H1 (cell line): ENCODE measurements at regions of chr20 and their contacts with region 1.

Region 1: DNA sequence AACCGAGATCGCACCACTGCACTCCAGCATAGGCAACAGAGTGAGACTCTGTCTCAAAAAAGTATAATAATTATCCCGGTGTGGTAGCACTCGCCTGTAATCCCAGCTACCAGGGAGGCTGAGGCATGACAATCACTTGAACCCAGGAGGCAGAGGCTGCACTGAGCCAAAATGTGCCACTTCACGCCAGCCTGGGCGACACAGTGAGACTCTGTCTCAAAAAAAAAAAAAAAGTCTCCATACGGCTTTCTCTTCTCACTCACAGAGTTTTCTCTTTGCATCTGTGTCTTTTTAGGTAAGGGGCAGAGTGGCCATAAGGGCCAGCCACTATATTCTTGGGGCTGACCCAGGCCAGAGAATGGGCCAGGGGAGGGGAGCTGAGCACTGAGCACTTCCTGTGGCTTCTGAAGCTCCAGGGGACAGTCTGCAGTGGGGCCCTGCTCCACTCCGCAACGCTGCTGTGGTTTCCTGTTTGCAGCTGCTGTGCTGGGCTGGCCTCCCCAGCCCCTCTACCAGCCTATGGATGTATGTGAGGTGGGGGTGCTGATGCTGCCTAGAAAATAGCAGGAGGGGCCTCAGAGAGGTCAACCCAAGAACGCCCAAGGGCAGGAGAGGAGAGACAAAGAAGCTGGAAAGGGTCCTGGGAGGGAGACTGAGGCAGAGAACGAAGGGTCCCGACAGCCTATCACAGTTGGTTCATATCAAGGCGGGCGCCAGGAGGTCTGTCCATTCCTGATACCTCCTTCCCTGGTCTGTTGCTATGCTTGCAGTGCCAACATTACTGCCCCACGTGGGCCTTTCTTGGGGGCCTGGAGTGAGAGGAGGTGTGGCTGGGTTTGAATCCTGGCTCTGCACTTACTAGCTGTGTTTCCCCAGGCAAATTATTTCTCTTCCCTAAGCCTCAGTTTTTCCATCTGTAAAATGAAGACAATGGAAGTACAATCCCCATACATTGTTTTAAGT is 16.0 kb downstream of the SLA2 start:
- DNase-seq: no peak
- H3K4me3 ChIP-seq: no peak overlapping the region
- H3K27ac ChIP-seq: no peak overlapping the region
- H3K4me1 ChIP-seq: no peaks in the 10 kb centered on the region; a peak in 2 of 7 replicates
- H3K27me3 ChIP-seq: no peaks in the 10 kb centered on the region
- CTCF ChIP-seq: no peak
- EP300 ChIP-seq: no peak
- POLR2A ChIP-seq: no peak
- RAD21 ChIP-seq: no peak

Region 2: DNA sequence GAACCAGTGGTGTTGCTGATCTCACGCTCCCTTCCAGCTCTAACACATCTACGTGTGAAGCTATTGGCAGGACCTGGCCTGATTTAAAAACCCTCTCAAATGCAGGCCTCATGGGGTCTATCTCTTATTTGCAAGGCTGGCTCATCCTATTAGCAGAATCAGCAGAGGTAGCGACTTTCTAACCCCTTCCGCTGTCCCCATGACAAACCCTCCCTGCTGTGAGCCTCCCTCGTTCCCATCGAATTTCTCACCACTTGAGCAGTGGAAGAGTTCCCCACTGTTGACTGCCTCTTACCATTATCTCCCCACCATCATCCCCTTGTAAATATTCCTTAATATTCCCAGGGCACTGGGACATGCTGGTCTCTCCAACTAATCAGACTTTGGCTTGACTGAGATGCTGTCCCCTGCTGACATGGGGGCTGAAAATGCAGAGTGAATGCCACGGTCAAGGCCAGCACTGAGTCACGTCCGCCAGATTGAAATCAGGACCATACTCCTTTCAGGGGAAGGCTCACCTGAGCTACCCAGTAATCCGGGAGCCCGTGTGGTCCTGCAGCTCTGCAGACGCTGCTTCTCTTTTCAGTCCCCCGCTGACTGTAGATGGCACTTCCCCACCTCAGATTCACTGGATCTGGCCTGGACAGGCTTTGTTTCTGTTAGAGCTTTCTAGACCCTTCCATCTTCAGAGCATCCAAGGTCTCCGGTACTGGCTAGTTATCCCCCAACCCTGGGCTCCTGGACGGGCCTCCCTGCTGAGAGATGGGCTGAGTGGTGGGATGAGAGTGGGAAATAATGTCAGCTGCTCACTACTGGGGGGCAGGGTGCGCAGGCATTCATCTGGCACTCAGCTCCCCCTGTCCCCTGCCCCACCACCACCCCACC is 370.6 kb before region 1 on chr20:
- CTCF ChIA-PET with region 1: no interaction called
- POLR2A ChIA-PET with region 1: no interaction called
- DNase-seq: no peak
- H3K4me3 ChIP-seq: 0 out of 8 replicates have a peak overlapping the region, but pooled peaks of 1 of the 4 experiments have one; percentile 21
- H3K27ac ChIP-seq: no peak overlapping the region
- H3K4me1 ChIP-seq: peaks cover 7 to 10% (median 8%) of the 10 kb centered on the region in 4 experiments; a peak in 5 of 7 replicates
- H3K27me3 ChIP-seq: no peaks in the 10 kb centered on the region
- CTCF ChIP-seq: no peak
- EP300 ChIP-seq: no peak
- POLR2A ChIP-seq: no peak
- RAD21 ChIP-seq: no peak

Region 3: DNA sequence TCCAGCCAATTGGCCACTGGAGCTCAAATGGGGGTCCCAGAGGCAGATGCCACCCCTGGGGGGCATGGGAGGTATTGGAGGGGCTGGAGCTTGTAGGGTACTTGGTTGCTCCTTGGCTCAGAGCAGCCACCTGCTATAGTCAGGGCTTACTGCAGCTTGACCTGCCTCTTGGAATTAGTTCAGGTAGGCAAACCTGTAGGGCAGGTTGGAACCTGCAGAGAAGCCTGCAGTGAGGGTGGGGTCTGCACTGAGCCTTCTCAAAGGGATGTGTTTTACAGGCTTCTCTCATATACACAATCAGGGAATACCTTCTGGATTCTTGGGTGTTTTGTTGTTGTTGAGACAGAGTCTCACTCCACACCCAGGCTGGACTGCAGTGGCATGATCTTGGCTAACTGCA is 182.9 kb before region 1 on chr20:
- CTCF ChIA-PET with region 1: no interaction called
- POLR2A ChIA-PET with region 1: no interaction called
- DNase-seq: peak in 1 of 2 experiments; percentile 52
- H3K4me3 ChIP-seq: no peak overlapping the region
- H3K27ac ChIP-seq: no peak overlapping the region
- H3K4me1 ChIP-seq: peaks cover 4 to 11% (median 5%) of the 10 kb centered on the region in 4 experiments; a peak in 4 of 7 replicates
- H3K27me3 ChIP-seq: no peaks in the 10 kb centered on the region
- CTCF ChIP-seq: no peak
- EP300 ChIP-seq: no peak
- POLR2A ChIP-seq: no peak
- RAD21 ChIP-seq: no peak

Region 4: DNA sequence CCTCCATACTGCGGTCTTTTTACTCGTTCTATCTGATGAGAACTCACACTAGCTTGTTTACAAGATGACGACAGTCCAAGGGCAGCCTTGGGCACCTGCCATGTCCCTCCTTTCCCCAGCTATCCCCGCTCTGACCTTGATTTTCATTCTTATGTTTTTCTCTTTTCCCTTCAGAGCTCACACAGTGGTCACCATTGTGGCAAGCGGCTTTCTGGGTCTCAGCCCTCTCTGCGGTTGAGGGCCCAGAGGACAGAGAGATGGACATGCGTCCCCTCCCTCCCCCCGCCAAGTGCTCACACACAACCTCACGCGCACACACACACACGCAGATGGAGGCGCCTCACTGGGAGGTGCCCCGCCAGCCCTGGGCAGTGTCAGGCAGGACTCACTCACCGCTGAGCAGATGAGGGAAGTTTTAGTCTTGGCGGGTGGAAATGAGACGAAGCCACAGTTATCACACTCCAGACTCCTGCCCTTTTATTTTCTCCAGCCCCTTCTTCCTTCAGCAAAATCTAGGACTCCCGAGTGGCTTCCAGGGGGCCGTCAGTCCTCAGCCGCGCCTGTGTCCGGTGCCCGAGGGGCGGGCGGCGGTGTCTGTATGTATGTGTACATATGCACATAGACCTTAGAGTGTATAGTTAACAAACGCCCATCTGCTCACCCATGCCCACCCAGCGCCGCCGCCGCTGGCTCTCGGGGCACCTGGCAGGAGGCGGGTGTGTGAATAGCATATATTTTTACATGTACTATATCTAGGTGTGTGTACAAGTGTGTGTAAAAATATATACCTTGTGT is 102.5 kb before region 1 on chr20:
- CTCF ChIA-PET with region 1: no interaction called
- POLR2A ChIA-PET with region 1: no interaction called
- DNase-seq: no peak
- H3K4me3 ChIP-seq: no peak overlapping the region
- H3K27ac ChIP-seq: no peak overlapping the region
- H3K4me1 ChIP-seq: no peaks in the 10 kb centered on the region
- H3K27me3 ChIP-seq: no peaks in the 10 kb centered on the region
- CTCF ChIP-seq: no peak
- EP300 ChIP-seq: no peak
- POLR2A ChIP-seq: no peak
- RAD21 ChIP-seq: no peak

Region 5: GRCh38 chr20:36645998-36646397 is 16.0 kb after region 1 on chr20 and contains the start of gene SLA2:
- CTCF ChIA-PET with region 1: interaction called, 27 read pairs
- POLR2A ChIA-PET with region 1: interaction called, 6 read pairs
- DNase-seq: no peak
- H3K4me3 ChIP-seq: no peak within 1 kb of the TSS
- H3K27ac ChIP-seq: no peak within 1 kb of the TSS
- H3K4me1 ChIP-seq: peaks cover 1 to 13% (median 6%) of the 10 kb centered on the region in 4 experiments; a peak in 4 of 7 replicates
- H3K27me3 ChIP-seq: no peaks in the 10 kb centered on the region
- CTCF ChIP-seq: no peak
- EP300 ChIP-seq: no peak
- POLR2A ChIP-seq: no peak
- RAD21 ChIP-seq: no peak
- total RNA-seq, gene SLA2: 0.19 TPM in 1 of 2 replicates, not detected in the other